ENCODE measurements at regions of chr12 and their contacts with region 1.

Region 1: DNA sequence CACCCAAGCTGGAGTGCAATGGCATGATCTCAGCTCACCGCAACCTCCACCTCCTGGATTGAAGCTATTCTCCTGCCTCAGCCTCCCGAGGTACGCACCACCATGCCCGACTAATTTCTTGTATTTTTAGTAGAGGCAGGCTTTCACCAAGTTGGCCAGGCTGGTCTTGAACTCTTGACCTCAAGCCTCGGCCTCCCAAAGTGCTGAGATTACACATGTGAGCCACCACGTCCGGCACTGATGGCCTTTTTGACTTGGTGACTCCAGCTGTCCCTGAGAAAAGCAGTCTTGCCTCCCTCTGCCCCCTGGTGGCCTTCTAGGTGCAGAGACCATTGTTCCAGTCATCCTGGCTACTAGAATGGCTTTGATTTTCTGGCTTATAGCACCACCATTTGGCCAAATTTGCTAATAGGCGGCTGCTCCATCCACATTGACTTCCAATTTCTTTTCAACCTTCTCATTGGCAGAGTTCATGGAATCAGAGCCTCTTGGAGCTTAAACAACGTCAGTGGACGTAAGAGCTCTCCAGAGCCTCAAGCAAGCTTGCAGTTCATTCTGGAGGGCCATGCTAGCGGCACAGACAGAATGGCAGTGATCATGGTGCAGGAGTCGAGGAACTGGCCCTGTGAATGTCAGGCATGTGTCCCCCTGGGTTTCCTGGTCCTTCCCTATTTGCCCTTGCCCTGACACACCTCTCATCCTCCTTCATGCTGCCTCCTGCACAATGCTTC is 25.4 kb upstream of the EIF4B start:
- DNase-seq: peak; percentile 81 to 91 (median 87)
- H3K4me3 ChIP-seq: no peak overlapping the region
- H3K4me3 Mint-ChIP-seq: no peak overlapping the region
- H3K27ac ChIP-seq: no peak overlapping the region
- H3K27ac Mint-ChIP-seq: peak overlapping the region in 3 of 7 donors; percentile 38 to 77 (median 42)
- H3K4me1 ChIP-seq: no peaks in the 10 kb centered on the region
- H3K4me1 Mint-ChIP-seq: peaks cover 1% of the 10 kb centered on the region
- H3K27me3 ChIP-seq: peaks cover 0 to 2% of the 10 kb centered on the region in 2 donors
- H3K27me3 Mint-ChIP-seq: peaks cover 5 to 13% (median 13%) of the 10 kb centered on the region in 3 donors
- CTCF ChIP-seq: peak; percentile 97

Region 2: GRCh38 chr12:52884526-52885293 is 96.1 kb before region 1 on chr12:
- intact Hi-C with region 1: loop called (anchors 2 kb)
- DNase-seq: peak; percentile 47 to 69 (median 67)
- H3K4me3 ChIP-seq: no peak overlapping the region
- H3K4me3 Mint-ChIP-seq: no peak overlapping the region
- H3K27ac ChIP-seq: no peak overlapping the region
- H3K27ac Mint-ChIP-seq: no peak overlapping the region
- H3K4me1 ChIP-seq: peaks cover 5 to 13% of the 10 kb centered on the region in 2 donors
- H3K4me1 Mint-ChIP-seq: peaks cover 14% of the 10 kb centered on the region
- H3K27me3 ChIP-seq: no peaks in the 10 kb centered on the region
- H3K27me3 Mint-ChIP-seq: peaks cover 2 to 11% (median 9%) of the 10 kb centered on the region in 3 donors
- CTCF ChIP-seq: peak; percentile 98